IMR-90 (cell line): ENCODE measurements at regions of chr10 and their contacts with region 1.

Region 1: DNA sequence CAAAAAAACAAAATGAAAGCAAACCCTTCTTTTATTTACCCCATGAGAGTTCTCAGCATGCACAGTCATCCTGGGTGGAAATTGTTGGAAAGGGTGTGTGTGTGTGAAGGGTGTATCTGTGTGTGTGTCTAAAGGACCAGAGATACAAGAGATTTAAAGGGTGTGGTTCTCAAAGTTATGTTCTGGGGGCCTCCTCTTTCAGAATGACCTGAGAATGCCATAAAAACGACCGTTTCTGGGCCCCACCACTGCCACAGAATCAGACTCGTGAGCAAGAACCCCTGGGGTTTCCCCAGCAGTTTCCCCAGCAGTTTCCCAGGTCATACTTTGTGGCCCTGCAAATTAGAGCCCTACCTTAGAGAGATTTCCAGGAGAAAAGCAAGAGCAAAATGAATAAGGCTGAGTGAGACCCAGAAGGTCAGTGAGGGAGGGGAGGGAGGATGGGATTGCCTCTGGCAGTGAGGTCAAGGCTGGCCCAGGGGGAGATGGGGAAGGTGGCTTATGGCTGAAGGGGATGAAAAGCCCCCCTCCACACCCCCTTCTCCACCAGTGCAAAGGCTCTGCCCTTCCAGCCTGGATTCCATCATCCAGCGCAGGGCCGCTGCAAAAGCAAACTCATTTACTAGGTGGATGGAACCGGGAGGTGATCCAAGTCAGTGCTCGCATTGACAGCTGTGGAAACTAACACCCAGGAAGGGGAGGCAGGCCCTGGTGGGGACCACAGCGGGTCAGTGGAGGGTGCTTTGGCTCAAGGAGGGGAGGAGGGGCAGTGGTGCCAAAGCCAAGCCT is 10.2 kb downstream of the PYROXD2 start:
- DNase-seq: peak; percentile 76
- ATAC-seq: peak; percentile 72
- H3K4me3 ChIP-seq: no peak overlapping the region
- H3K27ac ChIP-seq: peak overlapping the region; percentile 76
- H3K4me1 ChIP-seq: peaks cover 19% of the 10 kb centered on the region
- H3K27me3 ChIP-seq: no peaks in the 10 kb centered on the region
- CTCF ChIP-seq: no peak
- POLR2A ChIP-seq: no peak
- RAD21 ChIP-seq: no peak

Region 2: DNA sequence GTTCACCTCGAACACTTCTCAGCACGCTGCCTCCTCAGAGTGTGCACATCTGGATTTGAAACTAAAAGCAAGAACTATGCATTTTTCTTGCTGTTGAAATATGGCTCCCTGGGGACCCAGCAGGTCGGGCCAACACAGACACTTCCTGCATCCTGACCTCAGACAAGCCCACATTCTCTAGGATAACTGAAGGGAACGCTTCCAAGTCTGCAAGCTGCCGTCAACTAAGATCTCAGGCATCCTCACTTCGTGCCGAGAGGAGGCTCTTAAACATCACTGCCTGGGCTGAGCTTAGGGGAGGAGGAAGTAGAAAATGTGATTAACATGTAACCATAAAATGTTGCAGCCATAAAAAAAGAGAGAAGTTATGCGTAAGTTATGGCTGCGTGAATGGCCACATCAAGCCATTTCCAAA is 55.2 kb before region 1 on chr10:
- CTCF ChIA-PET with region 1: no interaction called
- POLR2A ChIA-PET with region 1: no interaction called
- dilution Hi-C with region 1: no loop called
- in situ Hi-C with region 1: no loop called
- intact Hi-C with region 1: loop called (anchors 5 kb)
- DNase-seq: peak; percentile 99
- ATAC-seq: peak; percentile 95
- H3K4me3 ChIP-seq: no peak overlapping the region
- H3K27ac ChIP-seq: peak overlapping the region; percentile 76
- H3K4me1 ChIP-seq: peaks cover 9% of the 10 kb centered on the region
- H3K27me3 ChIP-seq: no peaks in the 10 kb centered on the region
- CTCF ChIP-seq: 0 out of 2 replicates have a peak, but pooled peaks have one; percentile 0
- POLR2A ChIP-seq: no peak
- RAD21 ChIP-seq: peak; percentile 29; the same call in 1 of the 2 replicates